Activated CD4-positive, alpha-beta memory T cell treated with anti-CD3 and anti-CD28 coated beads, Interleukin-2, amount 10 ng/mL, durations not matched to agents 7 days and 5 days (primary cell): ENCODE measurements at regions of chr3 and their contacts with region 1.

Region 1: GRCh38 chr3:192851821-192852424 is 65.7 kb downstream of the MB21D2 start:
- DNase-seq: no peak
- H3K4me3 Mint-ChIP-seq: no peak overlapping the region
- H3K27ac Mint-ChIP-seq: no peak overlapping the region
- H3K4me1 Mint-ChIP-seq: peaks cover 57% of the 10 kb centered on the region
- H3K27me3 Mint-ChIP-seq: no peaks in the 10 kb centered on the region

Region 2: DNA sequence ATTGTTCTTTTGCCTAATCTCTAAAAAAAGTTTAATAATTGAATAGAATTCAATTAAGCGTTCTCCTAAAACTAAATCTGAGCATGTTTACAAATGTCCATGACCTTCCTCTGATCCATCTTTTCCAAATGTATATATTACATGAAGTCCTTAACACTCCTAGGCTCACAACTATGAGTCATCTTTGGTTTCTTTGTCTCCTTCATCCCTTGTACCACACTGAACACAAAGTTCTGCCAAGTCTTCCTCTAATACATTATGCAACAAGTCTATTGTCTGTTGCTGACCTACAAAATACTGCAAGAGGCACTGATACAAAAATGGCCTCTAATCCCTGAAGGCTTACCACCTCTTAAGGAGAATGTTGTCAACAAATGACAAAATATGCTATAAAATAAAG is 840.8 kb before region 1 on chr3:
- CTCF ChIA-PET with region 1: no interaction called
- POLR2A ChIA-PET with region 1: no interaction called
- DNase-seq: no peak
- H3K4me3 Mint-ChIP-seq: no peak overlapping the region
- H3K27ac Mint-ChIP-seq: no peak overlapping the region
- H3K4me1 Mint-ChIP-seq: no peaks in the 10 kb centered on the region
- H3K27me3 Mint-ChIP-seq: no peaks in the 10 kb centered on the region

Region 3: DNA sequence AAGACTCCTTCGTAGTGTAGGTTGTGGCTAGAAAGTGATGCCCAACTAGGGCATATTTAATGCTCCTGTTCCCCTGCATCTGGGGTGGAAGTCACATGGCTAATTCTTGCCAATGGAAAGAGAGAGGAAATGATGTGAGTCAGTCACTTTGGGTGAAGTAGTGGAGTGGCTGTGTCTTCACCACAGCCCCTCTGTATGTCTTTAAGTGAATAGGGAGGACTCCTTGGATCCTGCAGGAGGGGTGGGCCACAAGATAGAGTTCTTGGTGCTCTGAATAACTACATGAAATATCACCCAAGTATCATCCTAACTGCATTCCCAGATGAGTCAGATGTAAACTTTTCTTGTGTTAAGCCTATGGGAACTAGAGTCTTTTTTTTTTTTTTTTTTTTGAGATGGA is 83.5 kb after region 1 on chr3:
- CTCF ChIA-PET with region 1: no interaction called
- POLR2A ChIA-PET with region 1: no interaction called
- DNase-seq: no peak
- H3K4me3 Mint-ChIP-seq: no peak overlapping the region
- H3K27ac Mint-ChIP-seq: no peak overlapping the region
- H3K4me1 Mint-ChIP-seq: peaks cover 10% of the 10 kb centered on the region
- H3K27me3 Mint-ChIP-seq: no peaks in the 10 kb centered on the region

Region 4: GRCh38 chr3:193040836-193041672 is 189.1 kb after region 1 on chr3:
- CTCF ChIA-PET with region 1: interaction called, 11 read pairs
- POLR2A ChIA-PET with region 1: no interaction called
- DNase-seq: no peak
- H3K4me3 Mint-ChIP-seq: no peak overlapping the region
- H3K27ac Mint-ChIP-seq: no peak overlapping the region
- H3K4me1 Mint-ChIP-seq: peaks cover 4% of the 10 kb centered on the region
- H3K27me3 Mint-ChIP-seq: no peaks in the 10 kb centered on the region